Common myeloid progenitor, CD34-positive (primary cell): ENCODE measurements at regions of chr2 and their contacts with region 1.

Region 1: DNA sequence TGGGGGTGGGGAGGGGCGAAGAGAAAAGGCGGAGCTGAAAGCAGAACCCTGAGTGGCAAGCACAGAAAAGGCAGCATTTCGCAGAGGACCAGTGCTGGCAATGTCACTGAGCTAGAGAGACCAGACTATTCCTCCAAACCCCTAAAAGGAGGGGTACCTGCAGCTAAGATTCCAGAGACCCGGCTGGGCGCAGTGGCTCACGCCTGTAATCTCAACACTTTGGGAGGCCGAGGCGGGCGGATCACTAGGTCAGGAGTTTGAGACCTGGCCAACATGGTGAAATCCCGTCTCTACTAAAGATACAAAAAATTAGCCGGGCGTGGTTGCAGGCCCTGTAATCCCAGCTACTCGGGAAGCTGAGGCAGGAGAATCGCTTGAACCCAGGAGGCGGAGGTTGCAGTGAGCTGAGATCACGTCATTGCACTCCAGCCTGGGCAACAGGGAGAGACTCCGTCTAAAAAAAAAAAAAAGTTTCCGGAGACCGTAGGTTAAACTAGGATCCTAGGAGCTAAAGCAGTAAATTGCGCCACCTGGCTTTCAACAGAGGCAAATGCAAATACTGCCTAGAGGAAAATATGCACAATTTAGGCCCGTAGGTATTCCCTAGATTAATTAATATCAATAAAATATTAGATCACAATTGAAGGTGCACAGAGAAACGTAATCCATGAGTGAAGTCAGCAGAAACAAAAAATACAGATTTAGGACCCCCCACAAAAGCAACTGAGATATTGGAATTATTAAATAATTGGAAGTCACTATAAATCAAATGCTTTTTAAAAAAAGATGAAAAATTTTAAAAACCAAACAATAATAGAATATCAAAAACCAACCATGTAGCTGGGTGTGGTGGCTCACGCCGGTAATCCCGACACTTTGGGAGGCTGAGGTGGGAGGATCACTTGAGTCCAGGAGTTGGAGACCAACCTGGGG is 4.9 kb downstream of the UCN start:
- DNase-seq: peak; percentile 67 to 78 (median 75)
- H3K4me3 ChIP-seq: peak overlapping the region in 3 of 7 experiments; percentile 54 to 71 (median 57)
- H3K27ac ChIP-seq: no peak overlapping the region
- H3K4me1 ChIP-seq: peaks cover 0 to 26% (median 18%) of the 10 kb centered on the region in 4 experiments
- H3K27me3 ChIP-seq: peaks cover 0 to 37% (median 19%) of the 10 kb centered on the region in 5 experiments

Region 2: GRCh38 chr2:27095745-27096651 is 207.4 kb before region 1 on chr2:
- CTCF ChIA-PET with region 1: interaction called, 30 read pairs
- POLR2A ChIA-PET with region 1: no interaction called
- DNase-seq: peak in 2 of 3 donors; percentile 66 to 68
- H3K4me3 ChIP-seq: peak overlapping the region in 5 of 7 experiments; percentile 35 to 77 (median 57)
- H3K27ac ChIP-seq: peak overlapping the region in 1 of 2 experiments; percentile 11
- H3K4me1 ChIP-seq: peaks cover 0 to 12% (median 10%) of the 10 kb centered on the region in 4 experiments
- H3K27me3 ChIP-seq: no peaks in the 10 kb centered on the region

Region 3: DNA sequence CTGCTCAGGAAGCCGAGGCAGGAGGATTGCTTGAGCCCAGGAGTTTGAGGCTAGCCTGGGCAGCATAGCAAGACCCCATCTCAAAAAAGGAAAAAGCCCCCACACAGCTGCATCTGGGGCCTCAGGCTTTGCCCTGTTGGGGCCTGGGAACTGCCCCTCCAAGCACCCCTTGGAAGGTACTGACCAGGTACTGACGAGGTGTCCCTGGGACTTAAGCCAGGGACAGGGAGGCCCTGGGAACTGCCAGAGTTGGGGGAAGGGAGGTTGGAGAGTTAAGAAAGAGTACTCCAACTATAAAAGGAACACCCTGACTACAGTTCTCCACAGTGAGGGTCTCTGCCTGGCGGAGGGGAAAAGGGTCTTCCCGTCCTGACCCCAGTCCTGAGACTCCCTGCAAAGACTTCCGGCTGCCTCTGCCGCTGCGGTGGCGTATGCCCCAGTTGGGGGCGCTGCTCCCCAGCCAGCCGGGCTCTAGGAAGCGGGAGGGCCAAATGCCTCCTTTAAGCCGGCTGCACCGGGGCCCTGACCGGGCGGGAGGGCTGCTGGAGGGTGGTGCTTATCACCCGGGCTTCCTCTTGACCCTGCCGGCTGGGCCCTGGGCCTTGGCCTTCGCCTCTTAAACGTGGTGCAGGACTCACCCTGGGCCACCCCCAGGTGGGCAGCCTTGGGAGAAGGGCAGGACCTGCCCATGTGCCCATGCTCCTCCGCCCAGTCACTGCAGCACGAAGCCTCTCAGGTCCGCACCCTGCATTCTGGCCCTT is 53.3 kb before region 1 on chr2:
- CTCF ChIA-PET with region 1: interaction called, 51 read pairs
- POLR2A ChIA-PET with region 1: no interaction called
- DNase-seq: peak; percentile 54 to 74 (median 70)
- H3K4me3 ChIP-seq: peak overlapping the region in 3 of 7 experiments; percentile 11 to 22 (median 13)
- H3K27ac ChIP-seq: no peak overlapping the region
- H3K4me1 ChIP-seq: peaks cover 0 to 7% (median 1%) of the 10 kb centered on the region in 4 experiments
- H3K27me3 ChIP-seq: peaks cover 0 to 8% (median 0%) of the 10 kb centered on the region in 5 experiments

Region 4: GRCh38 chr2:27264753-27265535 is 38.4 kb before region 1 on chr2:
- CTCF ChIA-PET with region 1: interaction called, 24 read pairs
- POLR2A ChIA-PET with region 1: no interaction called
- DNase-seq: peak; percentile 73 to 80 (median 77)
- H3K4me3 ChIP-seq: peak overlapping the region; percentile 3 to 76 (median 58)
- H3K27ac ChIP-seq: no peak overlapping the region
- H3K4me1 ChIP-seq: peaks cover 0 to 37% (median 36%) of the 10 kb centered on the region in 4 experiments
- H3K27me3 ChIP-seq: peaks cover 10 to 72% (median 48%) of the 10 kb centered on the region in 5 experiments

Region 5: GRCh38 chr2:27281855-27282559 is 21.4 kb before region 1 on chr2 and contains the start of gene TRIM54:
- CTCF ChIA-PET with region 1: interaction called, 94 read pairs
- POLR2A ChIA-PET with region 1: interaction called, 4 read pairs
- DNase-seq: no peak
- H3K4me3 ChIP-seq: no peak within 1 kb of the TSS
- H3K27ac ChIP-seq: no peak within 1 kb of the TSS
- H3K4me1 ChIP-seq: no peaks in the 10 kb centered on the region
- H3K27me3 ChIP-seq: peaks cover 0 to 5% (median 0%) of the 10 kb centered on the region in 5 experiments

Region 6: DNA sequence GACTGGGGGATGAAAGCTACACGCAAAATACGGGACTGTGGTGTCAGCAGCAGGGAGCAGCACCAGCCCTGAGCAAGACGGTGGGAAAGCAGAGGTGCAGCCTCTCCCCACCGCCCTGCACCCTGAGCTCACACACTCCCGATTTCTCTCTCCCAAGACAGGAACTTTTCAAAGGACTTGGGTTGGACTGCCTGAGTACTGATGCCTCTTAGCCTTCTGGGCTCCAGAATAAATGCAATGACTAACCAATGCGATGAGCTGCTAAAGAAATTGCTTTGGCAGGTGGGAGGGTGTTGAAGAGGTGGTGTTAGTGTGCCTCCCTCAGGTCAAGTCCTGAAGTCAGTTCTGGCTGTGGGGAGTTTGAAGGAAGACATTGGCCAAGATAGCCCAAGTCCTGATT is 11.5 kb before region 1 on chr2:
- CTCF ChIA-PET with region 1: interaction called, 60 read pairs
- POLR2A ChIA-PET with region 1: no interaction called
- DNase-seq: peak in 2 of 3 donors; percentile 29 to 30
- H3K4me3 ChIP-seq: no peak overlapping the region
- H3K27ac ChIP-seq: no peak overlapping the region
- H3K4me1 ChIP-seq: peaks cover 7 to 29% (median 21%) of the 10 kb centered on the region in 4 experiments
- H3K27me3 ChIP-seq: no peaks in the 10 kb centered on the region

Region 7: GRCh38 chr2:27322766-27323595 is 19.6 kb after region 1 on chr2 and contains the start of gene MPV17:
- CTCF ChIA-PET with region 1: interaction called, 28 read pairs
- POLR2A ChIA-PET with region 1: no interaction called
- DNase-seq: peak; percentile 82 to 89 (median 86)
- H3K4me3 ChIP-seq: peak within 1 kb of the TSS; percentile 85 to 99 (median 93)
- H3K27ac ChIP-seq: peak within 1 kb of the TSS; percentile 98 to 99
- H3K4me1 ChIP-seq: peaks cover 9 to 22% (median 15%) of the 10 kb centered on the region in 4 experiments
- H3K27me3 ChIP-seq: no peaks in the 10 kb centered on the region